MCF 10A (cell line): ENCODE measurements at regions of chr1 and their contacts with region 1.

Region 1: GRCh38 chr1:155250633-155251449 is 4.4 kb downstream of the ENTREP3 start:
- DNase-seq: peak; percentile 94
- H3K4me3 Mint-ChIP-seq: no peak overlapping the region
- H3K27ac Mint-ChIP-seq: no peak overlapping the region
- H3K4me1 Mint-ChIP-seq: peaks cover 19% of the 10 kb centered on the region
- H3K27me3 Mint-ChIP-seq: no peaks in the 10 kb centered on the region
- CTCF ChIP-seq: peak; percentile 100

Region 2: DNA sequence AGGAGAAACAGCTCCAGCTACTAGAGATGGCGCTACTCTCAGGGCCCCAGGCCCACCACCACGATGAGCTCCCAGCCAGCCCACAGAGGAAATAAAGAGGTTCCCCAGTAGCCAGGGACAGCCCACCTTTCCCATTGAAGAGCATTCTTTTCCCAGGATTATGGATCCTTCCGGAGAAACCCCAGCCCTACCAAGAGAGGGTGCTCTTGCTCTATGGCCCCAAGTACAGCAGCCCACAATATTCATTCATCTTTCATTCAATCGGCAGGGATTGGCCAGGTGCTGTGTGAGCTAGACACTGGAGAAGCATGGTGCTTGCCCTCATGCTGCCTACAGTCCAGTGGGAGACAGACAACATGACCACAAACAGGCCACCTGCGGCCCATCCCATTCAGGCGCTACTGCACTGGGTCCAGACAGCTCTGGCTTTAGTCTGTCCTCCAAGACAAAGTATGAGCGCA is 344.2 kb before region 1 on chr1:
- CTCF ChIA-PET with region 1: no interaction called
- POLR2A ChIA-PET with region 1: no interaction called
- intact Hi-C with region 1: no loop called
- DNase-seq: peak; percentile 57
- H3K4me3 Mint-ChIP-seq: no peak overlapping the region
- H3K27ac Mint-ChIP-seq: no peak overlapping the region
- H3K4me1 Mint-ChIP-seq: no peaks in the 10 kb centered on the region
- H3K27me3 Mint-ChIP-seq: no peaks in the 10 kb centered on the region
- CTCF ChIP-seq: peak; percentile 45

Region 3: GRCh38 chr1:155105604-155106022 is 145.2 kb before region 1 on chr1:
- CTCF ChIA-PET with region 1: no interaction called
- POLR2A ChIA-PET with region 1: no interaction called
- intact Hi-C with region 1: no loop called
- DNase-seq: peak; percentile 26
- H3K4me3 Mint-ChIP-seq: no peak overlapping the region
- H3K27ac Mint-ChIP-seq: peak overlapping the region; percentile 4
- H3K4me1 Mint-ChIP-seq: peaks cover 18% of the 10 kb centered on the region
- H3K27me3 Mint-ChIP-seq: no peaks in the 10 kb centered on the region
- CTCF ChIP-seq: no peak

Region 4: DNA sequence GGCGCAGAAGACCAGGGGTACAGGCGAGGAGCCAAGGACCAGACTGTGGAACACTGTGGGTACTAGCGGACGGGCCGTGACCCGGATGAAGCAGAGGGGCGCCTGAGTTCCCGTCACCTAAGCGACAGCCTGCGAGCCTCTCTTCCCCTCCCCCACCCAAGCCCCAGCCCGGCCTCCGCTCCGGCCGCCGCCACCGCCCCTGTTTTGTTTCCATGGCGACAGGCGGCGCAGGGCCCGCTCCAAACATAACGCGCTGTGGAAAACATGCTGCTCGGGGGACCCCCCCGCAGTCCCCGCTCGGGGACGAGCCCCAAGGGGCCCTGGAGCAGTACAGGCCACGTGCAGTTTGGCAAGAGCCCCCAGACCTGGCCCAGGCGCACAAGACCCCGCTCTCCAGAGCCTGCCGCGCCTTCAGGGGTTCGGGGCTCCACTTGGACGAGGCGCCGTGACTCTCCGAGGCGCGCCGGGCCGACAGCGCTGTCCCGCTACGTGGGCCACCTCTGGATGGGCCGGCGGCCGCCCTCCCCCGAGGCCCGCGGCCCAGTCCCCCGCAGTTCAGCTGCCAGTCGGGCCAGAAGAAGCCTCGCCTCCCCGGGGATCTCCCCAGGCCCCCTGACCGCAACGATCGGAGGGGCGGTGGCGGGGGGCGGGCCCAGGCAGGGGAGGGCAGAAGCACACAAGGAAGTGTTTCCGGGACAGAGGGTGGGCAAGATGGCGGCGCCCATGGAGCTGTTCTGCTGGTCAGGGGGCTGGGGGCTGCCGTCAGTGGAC is 42.1 kb before region 1 on chr1 and contains the start of gene MTX1:
- CTCF ChIA-PET with region 1: interaction called, 55 read pairs
- POLR2A ChIA-PET with region 1: interaction called, 6 read pairs
- intact Hi-C with region 1: no loop called
- DNase-seq: peak; percentile 79
- H3K4me3 Mint-ChIP-seq: peak within 1 kb of the TSS; percentile 76
- H3K27ac Mint-ChIP-seq: peak within 1 kb of the TSS; percentile 91
- H3K4me1 Mint-ChIP-seq: peaks cover 22% of the 10 kb centered on the region
- H3K27me3 Mint-ChIP-seq: no peaks in the 10 kb centered on the region
- CTCF ChIP-seq: no peak
- total RNA-seq, gene MTX1: 64.6 and 67.4 TPM in 2 replicates

Region 5: GRCh38 chr1:155277070-155277895 is 26.4 kb after region 1 on chr1 and contains the start of gene HCN3:
- CTCF ChIA-PET with region 1: interaction called, 238 read pairs
- POLR2A ChIA-PET with region 1: interaction called, 12 read pairs
- intact Hi-C with region 1: no loop called
- DNase-seq: peak; percentile 98
- H3K4me3 Mint-ChIP-seq: peak within 1 kb of the TSS; percentile 72
- H3K27ac Mint-ChIP-seq: no peak within 1 kb of the TSS
- H3K4me1 Mint-ChIP-seq: peaks cover 18% of the 10 kb centered on the region
- H3K27me3 Mint-ChIP-seq: no peaks in the 10 kb centered on the region
- CTCF ChIP-seq: peak; percentile 90
- total RNA-seq, gene HCN3: 2.5 and 4.3 TPM in 2 replicates

Region 6: DNA sequence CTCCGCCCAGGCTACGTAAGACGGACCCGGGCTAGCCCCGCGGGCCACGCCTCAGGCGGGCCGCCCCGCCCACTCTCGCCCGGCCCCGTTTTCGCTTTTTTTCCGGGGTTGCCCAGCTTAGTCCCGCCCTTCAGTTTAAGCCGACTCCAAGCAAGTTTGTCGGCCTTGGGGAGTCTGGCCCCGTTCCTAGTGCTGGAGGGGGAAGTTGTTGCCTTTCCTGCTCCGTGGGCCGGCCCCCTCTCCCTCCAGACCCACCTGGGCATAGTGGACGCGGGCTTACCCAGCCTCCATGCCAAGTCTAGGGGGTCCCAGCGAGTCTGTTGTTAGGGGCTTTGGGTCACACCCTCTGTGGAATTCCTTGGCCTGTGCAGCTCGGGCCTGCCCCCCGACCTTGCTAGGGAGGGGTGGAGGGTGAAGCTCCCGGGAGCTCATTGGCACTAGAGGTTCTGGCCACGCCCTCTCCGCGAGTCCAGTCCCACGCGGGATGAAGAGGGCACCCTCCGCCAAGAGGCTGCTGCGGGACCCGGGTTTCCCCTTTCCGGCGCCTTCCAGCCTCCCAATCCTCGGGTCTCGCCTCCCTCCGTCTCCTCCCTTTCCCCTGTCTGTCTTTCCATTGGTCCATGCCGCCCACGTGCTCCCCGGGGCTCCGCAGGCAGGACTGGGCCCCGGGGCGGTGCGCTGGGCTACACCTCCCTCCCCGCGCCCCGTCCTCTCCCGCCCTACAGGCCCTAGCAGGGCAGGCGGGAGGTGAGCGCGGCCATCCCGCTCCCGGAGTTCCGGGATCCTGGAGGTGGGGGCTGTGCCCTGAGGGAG is 73.2 kb after region 1 on chr1:
- CTCF ChIA-PET with region 1: interaction called, 163 read pairs
- POLR2A ChIA-PET with region 1: interaction called, 32 read pairs
- intact Hi-C with region 1: loop called (anchors 2 kb)
- DNase-seq: peak; percentile 99
- H3K4me3 Mint-ChIP-seq: peak overlapping the region; percentile 90
- H3K27ac Mint-ChIP-seq: peak overlapping the region; percentile 55
- H3K4me1 Mint-ChIP-seq: peaks cover 30% of the 10 kb centered on the region
- H3K27me3 Mint-ChIP-seq: no peaks in the 10 kb centered on the region
- CTCF ChIP-seq: no peak

Region 7: GRCh38 chr1:155591770-155592169 is 340.9 kb after region 1 on chr1:
- CTCF ChIA-PET with region 1: interaction called, 23 read pairs
- POLR2A ChIA-PET with region 1: no interaction called
- intact Hi-C with region 1: loop called (anchors 1 kb)
- DNase-seq: peak; percentile 78
- H3K4me3 Mint-ChIP-seq: no peak overlapping the region
- H3K27ac Mint-ChIP-seq: no peak overlapping the region
- H3K4me1 Mint-ChIP-seq: no peaks in the 10 kb centered on the region
- H3K27me3 Mint-ChIP-seq: no peaks in the 10 kb centered on the region
- CTCF ChIP-seq: peak; percentile 80